B cell (primary cell): ENCODE measurements at regions of chr14 and their contacts with region 1.

Region 1: DNA sequence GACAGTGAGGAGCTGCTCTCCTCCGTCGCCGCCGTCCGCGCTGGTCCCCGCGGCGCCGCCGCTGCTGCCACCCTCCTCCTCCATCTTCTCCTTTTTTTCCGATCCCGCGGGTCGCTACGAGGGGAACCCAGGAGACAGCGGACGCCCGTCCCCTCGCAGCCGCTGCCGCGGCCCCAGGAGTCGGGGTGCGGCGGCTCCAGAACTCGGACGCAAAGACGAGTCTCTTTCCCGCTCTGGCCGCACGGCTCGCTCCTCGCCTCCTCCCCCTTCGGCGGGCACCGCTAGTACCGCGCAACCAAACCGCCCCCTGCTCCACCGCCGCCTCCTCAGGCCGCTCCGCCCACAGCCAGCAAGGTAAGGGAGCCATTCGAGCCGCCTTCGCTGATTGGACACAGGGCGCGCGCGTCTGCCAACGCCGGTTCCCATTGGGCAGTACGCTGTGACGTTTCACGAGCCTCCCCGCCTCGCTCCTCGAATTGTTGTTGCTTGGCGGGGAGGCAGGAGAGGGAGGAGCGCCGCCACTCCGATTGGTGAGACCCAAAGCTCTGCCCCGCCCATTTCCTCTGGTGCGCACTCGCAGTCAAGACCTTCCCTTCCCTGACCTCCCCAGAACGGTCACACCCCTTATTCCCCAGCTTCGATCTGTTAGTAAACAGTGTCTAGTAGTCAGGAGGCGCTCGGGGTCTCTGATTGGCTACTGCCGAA is at the start of gene RPS6KA5:
- DNase-seq: peak; percentile 100
- ATAC-seq: peak; percentile 80
- H3K4me3 ChIP-seq: peak within 1 kb of the TSS; percentile 80 to 97 (median 87)
- H3K4me3 Mint-ChIP-seq: peak within 1 kb of the TSS; percentile 86
- H3K27ac ChIP-seq: peak within 1 kb of the TSS; percentile 97 to 98
- H3K27ac Mint-ChIP-seq: peak within 1 kb of the TSS; percentile 83
- H3K4me1 ChIP-seq: peaks cover 26 to 35% of the 10 kb centered on the region in 2 donors
- H3K4me1 Mint-ChIP-seq: peaks cover 46% of the 10 kb centered on the region
- H3K27me3 ChIP-seq: no peaks in the 10 kb centered on the region
- H3K27me3 Mint-ChIP-seq: no peaks in the 10 kb centered on the region
- CTCF ChIP-seq: peak; percentile 12
- total RNA-seq, gene RPS6KA5: 33.8 and 34.6 TPM in 2 replicates

Region 2: DNA sequence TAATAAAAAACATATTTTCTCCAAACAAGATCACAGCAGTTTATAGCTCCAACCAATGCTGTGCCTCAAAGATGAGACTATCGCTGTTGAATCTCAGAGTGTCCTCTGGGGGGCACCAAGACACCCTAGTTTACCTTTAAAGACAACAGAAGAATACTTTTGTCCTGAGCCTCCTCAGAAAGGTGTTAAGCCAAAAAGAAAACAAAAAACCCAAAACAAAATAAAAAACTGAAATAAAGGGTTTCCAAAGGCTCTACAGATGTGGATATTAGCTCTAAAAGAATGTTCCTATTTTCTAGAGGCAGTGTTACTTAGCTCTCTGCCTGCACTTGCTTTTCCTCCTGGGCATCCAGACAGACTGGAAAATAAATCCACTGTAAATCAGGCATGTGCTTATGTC is 157.4 kb before region 1 on chr14:
- CTCF ChIA-PET with region 1: interaction called, 19 read pairs
- POLR2A ChIA-PET with region 1: no interaction called
- intact Hi-C with region 1: loop called (anchors 10 kb)
- DNase-seq: peak; percentile 68
- ATAC-seq: peak; percentile 69
- H3K4me3 ChIP-seq: no peak overlapping the region
- H3K4me3 Mint-ChIP-seq: no peak overlapping the region
- H3K27ac ChIP-seq: no peak overlapping the region
- H3K27ac Mint-ChIP-seq: peak overlapping the region; percentile 46
- H3K4me1 ChIP-seq: peaks cover 5 to 8% of the 10 kb centered on the region in 2 donors
- H3K4me1 Mint-ChIP-seq: peaks cover 15% of the 10 kb centered on the region
- H3K27me3 ChIP-seq: no peaks in the 10 kb centered on the region
- H3K27me3 Mint-ChIP-seq: no peaks in the 10 kb centered on the region
- CTCF ChIP-seq: peak; percentile 87

Region 3: GRCh38 chr14:91021991-91022621 is 38.4 kb before region 1 on chr14:
- CTCF ChIA-PET with region 1: no interaction called
- POLR2A ChIA-PET with region 1: interaction called, 4 read pairs
- intact Hi-C with region 1: loop called (anchors 1 kb)
- DNase-seq: no peak
- ATAC-seq: peak; percentile 61
- H3K4me3 ChIP-seq: peak overlapping the region; percentile 9 to 70 (median 41)
- H3K4me3 Mint-ChIP-seq: peak overlapping the region; percentile 92
- H3K27ac ChIP-seq: peak overlapping the region; percentile 59 to 89
- H3K27ac Mint-ChIP-seq: peak overlapping the region; percentile 99
- H3K4me1 ChIP-seq: peaks cover 34 to 39% of the 10 kb centered on the region in 2 donors
- H3K4me1 Mint-ChIP-seq: peaks cover 67% of the 10 kb centered on the region
- H3K27me3 ChIP-seq: no peaks in the 10 kb centered on the region
- H3K27me3 Mint-ChIP-seq: no peaks in the 10 kb centered on the region
- CTCF ChIP-seq: no peak

Region 4: GRCh38 chr14:91127401-91127854 is 66.9 kb after region 1 on chr14:
- CTCF ChIA-PET with region 1: no interaction called
- POLR2A ChIA-PET with region 1: no interaction called
- intact Hi-C with region 1: no loop called
- DNase-seq: no peak
- ATAC-seq: no peak
- H3K4me3 ChIP-seq: no peak overlapping the region
- H3K4me3 Mint-ChIP-seq: no peak overlapping the region
- H3K27ac ChIP-seq: peak overlapping the region in 1 of 2 donors; percentile 44
- H3K27ac Mint-ChIP-seq: no peak overlapping the region
- H3K4me1 ChIP-seq: peaks cover 19 to 23% of the 10 kb centered on the region in 2 donors
- H3K4me1 Mint-ChIP-seq: peaks cover 33% of the 10 kb centered on the region
- H3K27me3 ChIP-seq: no peaks in the 10 kb centered on the region
- H3K27me3 Mint-ChIP-seq: no peaks in the 10 kb centered on the region
- CTCF ChIP-seq: no peak

Region 5: GRCh38 chr14:91177073-91178034 is 116.9 kb after region 1 on chr14:
- CTCF ChIA-PET with region 1: interaction called, 43 read pairs
- POLR2A ChIA-PET with region 1: no interaction called
- intact Hi-C with region 1: loop called (anchors 1 kb)
- DNase-seq: peak; percentile 77
- ATAC-seq: peak; percentile 83
- H3K4me3 ChIP-seq: no peak overlapping the region
- H3K4me3 Mint-ChIP-seq: no peak overlapping the region
- H3K27ac ChIP-seq: peak overlapping the region in 1 of 2 donors; percentile 12
- H3K27ac Mint-ChIP-seq: no peak overlapping the region
- H3K4me1 ChIP-seq: peaks cover 0 to 12% of the 10 kb centered on the region in 2 donors
- H3K4me1 Mint-ChIP-seq: peaks cover 7% of the 10 kb centered on the region
- H3K27me3 ChIP-seq: no peaks in the 10 kb centered on the region
- H3K27me3 Mint-ChIP-seq: no peaks in the 10 kb centered on the region
- CTCF ChIP-seq: peak; percentile 95

Region 6: GRCh38 chr14:91418387-91419043 is 358.0 kb after region 1 on chr14:
- CTCF ChIA-PET with region 1: no interaction called
- POLR2A ChIA-PET with region 1: no interaction called
- intact Hi-C with region 1: loop called (anchors 1 kb)
- DNase-seq: peak; percentile 88
- ATAC-seq: peak; percentile 34
- H3K4me3 ChIP-seq: peak overlapping the region; percentile 30 to 97 (median 40)
- H3K4me3 Mint-ChIP-seq: peak overlapping the region; percentile 84
- H3K27ac ChIP-seq: peak overlapping the region; percentile 75 to 77
- H3K27ac Mint-ChIP-seq: peak overlapping the region; percentile 90
- H3K4me1 ChIP-seq: peaks cover 38% of the 10 kb centered on the region in 2 donors
- H3K4me1 Mint-ChIP-seq: peaks cover 38% of the 10 kb centered on the region
- H3K27me3 ChIP-seq: no peaks in the 10 kb centered on the region
- H3K27me3 Mint-ChIP-seq: no peaks in the 10 kb centered on the region
- CTCF ChIP-seq: peak; percentile 96

Region 7: GRCh38 chr14:91599994-91600393 is 539.5 kb after region 1 on chr14:
- CTCF ChIA-PET with region 1: no interaction called
- POLR2A ChIA-PET with region 1: no interaction called
- intact Hi-C with region 1: no loop called
- DNase-seq: no peak
- ATAC-seq: no peak
- H3K4me3 ChIP-seq: no peak overlapping the region
- H3K4me3 Mint-ChIP-seq: no peak overlapping the region
- H3K27ac ChIP-seq: no peak overlapping the region
- H3K27ac Mint-ChIP-seq: no peak overlapping the region
- H3K4me1 ChIP-seq: no peaks in the 10 kb centered on the region
- H3K4me1 Mint-ChIP-seq: no peaks in the 10 kb centered on the region
- H3K27me3 ChIP-seq: peaks cover 0 to 6% (median 0%) of the 10 kb centered on the region in 4 experiments
- H3K27me3 Mint-ChIP-seq: peaks cover 23% of the 10 kb centered on the region
- CTCF ChIP-seq: no peak